ENCODE measurements at regions of chr19 and their contacts with region 1.

Region 1: DNA sequence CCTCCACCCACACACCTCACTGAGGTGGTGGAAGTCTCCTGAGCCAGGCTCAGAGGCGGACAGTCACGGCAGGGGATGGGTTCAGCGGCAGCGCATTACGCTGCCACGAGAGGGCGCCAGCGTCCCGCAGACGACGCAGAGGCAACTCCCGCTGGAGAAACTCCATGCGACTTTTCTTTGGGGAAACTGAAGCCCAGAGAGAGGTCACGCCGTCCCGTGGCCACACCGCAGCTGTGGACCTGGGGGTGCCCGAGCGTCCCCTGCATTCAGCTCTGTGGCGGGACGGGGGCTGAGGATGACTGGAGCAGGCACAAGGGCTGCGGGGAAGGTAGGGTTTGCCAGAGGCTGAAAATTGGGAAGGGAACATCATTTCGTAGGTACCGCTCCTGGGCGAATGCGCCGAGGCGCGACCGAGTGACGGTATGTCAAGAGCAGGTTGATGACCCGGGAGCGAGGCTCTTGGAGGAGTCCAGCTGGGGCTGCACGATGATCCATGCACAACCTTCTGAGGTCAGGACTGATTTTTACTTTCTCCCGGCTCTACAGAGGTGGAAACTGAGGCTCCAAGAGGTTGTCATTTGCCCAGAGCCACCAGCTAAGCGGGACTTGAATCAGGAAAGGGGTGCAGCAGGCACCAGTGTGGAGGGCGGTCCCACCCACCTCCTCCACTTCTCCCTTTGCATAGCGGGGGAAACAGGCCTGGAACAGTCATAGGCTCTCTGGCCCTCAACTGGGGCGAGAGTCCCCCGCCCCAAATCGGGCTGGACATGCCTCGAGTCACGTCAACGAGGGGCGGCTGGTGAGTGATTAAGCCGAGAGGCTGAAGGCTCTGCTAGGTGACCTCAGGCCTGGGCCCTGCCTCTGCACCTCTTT is 690 bp upstream of the ARRDC2 start:
- DNase-seq: peak; percentile 92
- H3K4me3 ChIP-seq: peak overlapping the region; percentile 50 to 51
- H3K27ac ChIP-seq: peak overlapping the region; percentile 80 to 85
- H3K4me1 ChIP-seq: no peaks in the 10 kb centered on the region
- H3K27me3 ChIP-seq: no peaks in the 10 kb centered on the region
- CTCF ChIP-seq: peak; percentile 97 to 98 (median 98)
- POLR2A ChIP-seq: no peak

Region 2: DNA sequence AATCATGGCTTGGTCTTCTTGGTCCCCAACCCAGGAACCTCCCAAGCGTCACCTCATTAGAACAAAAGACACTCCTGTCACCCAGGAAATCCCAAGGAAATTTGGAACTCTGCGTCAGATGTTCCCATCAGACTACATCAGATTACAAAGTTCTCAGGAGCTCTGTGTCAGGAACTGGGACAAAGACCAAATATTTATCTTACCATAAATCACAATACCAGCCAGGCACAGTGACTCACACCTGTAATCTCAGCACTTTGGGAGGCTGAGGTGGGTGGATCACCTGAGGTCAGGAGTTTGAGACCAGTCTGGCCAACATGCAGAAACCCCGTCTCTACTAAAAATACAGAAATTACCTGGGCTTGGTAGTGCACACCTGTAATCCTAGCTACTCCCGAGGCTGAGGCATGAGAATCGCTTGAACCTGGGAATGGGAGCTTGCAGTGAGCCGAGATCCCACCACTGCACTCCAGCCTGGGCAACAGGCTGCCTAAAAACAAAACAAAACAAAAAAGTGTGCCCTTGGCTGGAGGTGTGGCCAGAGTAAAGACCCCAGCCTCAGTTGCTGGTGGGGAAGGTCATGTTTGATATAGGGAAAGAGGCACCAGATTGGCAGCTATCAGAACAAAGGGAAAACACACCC is 91.2 kb before region 1 on chr19:
- intact Hi-C with region 1: no loop called
- DNase-seq: no peak
- H3K4me3 ChIP-seq: no peak overlapping the region
- H3K27ac ChIP-seq: no peak overlapping the region
- H3K4me1 ChIP-seq: no peaks in the 10 kb centered on the region
- H3K27me3 ChIP-seq: no peaks in the 10 kb centered on the region
- CTCF ChIP-seq: no peak
- POLR2A ChIP-seq: no peak

Region 3: DNA sequence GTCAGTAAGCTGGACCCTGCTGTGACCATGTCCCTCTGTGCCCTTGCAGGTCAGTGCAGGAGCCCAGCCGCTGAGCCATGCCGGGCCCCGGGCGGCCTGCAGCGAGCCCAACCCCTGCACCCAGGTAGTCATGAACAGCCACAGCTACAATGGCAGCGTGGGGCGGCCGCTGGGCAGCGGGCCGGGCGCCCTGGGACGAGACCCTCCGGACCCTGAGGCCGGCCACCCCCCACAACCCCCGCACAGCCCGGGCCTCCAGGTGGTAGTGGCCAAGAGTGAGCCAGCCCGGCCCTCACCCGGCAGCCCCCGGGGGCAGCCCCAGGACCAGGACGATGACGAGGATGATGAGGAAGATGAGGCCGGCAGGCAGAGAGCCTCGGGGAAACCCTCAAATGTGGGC is 33.5 kb before region 1 on chr19:
- intact Hi-C with region 1: no loop called
- DNase-seq: no peak
- H3K4me3 ChIP-seq: no peak overlapping the region
- H3K27ac ChIP-seq: no peak overlapping the region
- H3K4me1 ChIP-seq: no peaks in the 10 kb centered on the region
- H3K27me3 ChIP-seq: no peaks in the 10 kb centered on the region
- CTCF ChIP-seq: no peak
- POLR2A ChIP-seq: no peak

Region 4: DNA sequence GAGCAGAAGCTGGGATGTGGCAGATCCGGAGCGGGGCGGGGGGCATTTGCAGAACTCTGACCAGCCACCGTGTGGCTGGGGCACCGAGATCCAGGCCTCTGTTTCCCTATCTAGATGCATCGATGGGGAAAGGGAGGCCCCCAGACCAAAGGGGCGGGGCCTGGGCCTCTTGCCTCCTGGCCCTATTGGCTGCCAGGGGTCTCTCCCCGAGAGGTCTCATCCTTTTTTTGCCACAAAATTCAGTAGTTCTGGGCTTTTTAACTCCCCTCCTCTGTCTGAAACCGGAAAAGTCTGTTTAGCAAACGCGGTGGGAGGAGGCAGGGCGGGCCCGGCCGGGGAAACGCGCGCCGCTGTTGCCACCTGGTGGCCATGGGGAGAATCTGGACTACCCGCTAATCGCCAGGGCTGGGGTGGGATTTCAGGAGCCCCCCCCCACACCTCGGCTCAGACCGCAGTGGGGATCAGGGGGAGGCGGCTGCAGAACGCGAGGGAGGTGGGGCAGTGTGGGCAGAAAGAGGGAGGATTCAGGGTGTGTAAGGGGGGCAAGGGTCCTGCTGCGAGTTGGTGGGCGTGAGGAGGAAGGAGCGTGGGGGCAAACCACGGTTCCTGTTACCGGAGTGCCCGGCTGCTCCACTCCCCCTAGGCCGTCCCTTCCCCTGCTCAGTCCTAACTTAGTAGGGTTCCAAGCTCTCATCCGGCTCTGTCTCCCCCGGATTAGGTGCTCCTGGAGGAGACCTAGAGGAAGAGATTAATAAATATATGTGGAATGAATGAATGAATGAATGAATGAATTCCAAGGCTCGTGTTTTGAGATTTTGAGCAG is 51.1 kb after region 1 on chr19:
- intact Hi-C with region 1: loop called (anchors 2 kb)
- DNase-seq: peak; percentile 79
- H3K4me3 ChIP-seq: no peak overlapping the region
- H3K27ac ChIP-seq: peak overlapping the region; percentile 3 to 70
- H3K4me1 ChIP-seq: peaks cover 10% of the 10 kb centered on the region
- H3K27me3 ChIP-seq: no peaks in the 10 kb centered on the region
- CTCF ChIP-seq: peak; percentile 95 to 98 (median 96)
- POLR2A ChIP-seq: no peak